CD4-positive, alpha-beta T cell (primary cell): ENCODE measurements at regions of chr7 and their contacts with region 1.

Region 1: DNA sequence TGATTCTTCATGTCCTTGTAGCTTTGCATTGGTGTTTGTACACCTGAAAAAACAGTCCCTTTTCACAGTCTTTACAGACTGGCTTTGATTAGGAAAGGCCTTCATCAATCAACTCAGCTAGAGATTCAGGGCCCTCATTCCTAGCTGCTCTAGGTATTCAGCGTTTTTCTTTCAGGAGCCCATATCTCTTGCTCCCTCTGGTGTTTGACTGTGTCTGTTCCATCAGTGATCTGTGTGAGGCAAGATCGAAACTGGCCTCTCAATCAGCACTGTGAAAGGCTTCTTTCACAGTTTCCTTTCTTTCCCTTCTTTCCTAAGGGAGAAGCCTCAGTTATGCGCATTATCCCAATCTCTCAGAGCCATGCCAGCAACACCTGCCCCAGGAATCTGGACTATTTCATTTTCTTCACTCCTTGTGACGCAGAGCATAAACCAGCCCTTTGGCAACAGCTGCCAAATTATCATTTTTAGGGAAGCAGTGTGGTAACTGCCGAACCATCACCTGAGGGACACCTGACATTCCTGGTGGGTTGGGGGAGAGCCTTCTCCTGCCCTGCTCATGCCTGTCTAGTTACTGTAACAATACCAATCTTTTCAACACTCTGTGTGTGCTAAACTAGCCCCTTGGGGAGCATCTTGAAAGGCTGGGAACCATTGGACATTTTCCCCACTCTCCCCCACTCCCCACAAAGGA is 75.7 kb upstream of the CCDC71L start:
- DNase-seq: peak in 10 of 14 experiments; percentile 7 to 80 (median 38)
- ATAC-seq: peak; percentile 91
- H3K4me3 ChIP-seq: no peak overlapping the region
- H3K4me3 Mint-ChIP-seq: peak overlapping the region; percentile 18
- H3K27ac ChIP-seq: no peak overlapping the region
- H3K27ac Mint-ChIP-seq: no peak overlapping the region
- H3K4me1 ChIP-seq: peaks cover 8% of the 10 kb centered on the region
- H3K4me1 Mint-ChIP-seq: peaks cover 17% of the 10 kb centered on the region
- H3K27me3 ChIP-seq: no peaks in the 10 kb centered on the region
- H3K27me3 Mint-ChIP-seq: no peaks in the 10 kb centered on the region
- CTCF ChIP-seq: peak; percentile 78

Region 2: GRCh38 chr7:106176414-106177299 is 560.0 kb before region 1 on chr7:
- CTCF ChIA-PET with region 1: interaction called, 6 read pairs
- POLR2A ChIA-PET with region 1: no interaction called
- intact Hi-C with region 1: loop called (anchors 1 kb)
- DNase-seq: peak; percentile 37 to 79 (median 61)
- ATAC-seq: peak; percentile 82
- H3K4me3 ChIP-seq: no peak overlapping the region
- H3K4me3 Mint-ChIP-seq: no peak overlapping the region
- H3K27ac ChIP-seq: no peak overlapping the region
- H3K27ac Mint-ChIP-seq: no peak overlapping the region
- H3K4me1 ChIP-seq: peaks cover 6% of the 10 kb centered on the region
- H3K4me1 Mint-ChIP-seq: peaks cover 5% of the 10 kb centered on the region
- H3K27me3 ChIP-seq: peaks cover 0 to 4% of the 10 kb centered on the region in 2 experiments
- H3K27me3 Mint-ChIP-seq: peaks cover 19% of the 10 kb centered on the region
- CTCF ChIP-seq: peak; percentile 95

Region 3: DNA sequence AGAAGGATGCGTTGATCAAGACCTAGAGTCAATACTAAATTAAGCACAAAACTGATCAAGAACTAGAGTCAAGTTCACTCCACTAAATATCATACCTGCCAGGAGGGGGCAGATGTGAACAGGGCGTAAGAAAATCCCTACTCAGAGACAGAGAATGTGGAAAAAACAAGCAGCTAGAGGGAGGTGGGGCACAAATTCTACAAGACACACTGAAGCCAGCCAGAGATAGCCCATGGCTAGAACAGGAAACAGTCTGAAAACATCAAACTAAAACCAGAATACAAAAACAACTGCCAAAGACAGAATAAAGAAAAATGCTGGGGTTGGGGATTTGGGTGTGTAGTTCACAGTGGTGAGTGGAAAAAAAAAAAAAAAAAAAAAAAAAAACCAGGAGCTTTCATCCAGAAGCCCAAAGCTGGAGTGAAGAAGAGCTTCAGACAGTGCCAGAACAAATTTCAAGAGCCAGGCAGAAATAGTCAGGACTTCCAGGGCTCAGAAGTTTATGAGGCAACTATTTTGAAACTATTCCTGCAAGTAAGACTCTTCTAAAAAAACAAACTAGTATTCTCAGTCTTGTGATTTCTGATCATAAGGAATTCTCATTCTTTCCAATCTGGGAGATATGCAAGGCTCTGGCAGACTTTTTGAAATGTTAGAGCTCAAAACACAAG is 194.0 kb before region 1 on chr7:
- CTCF ChIA-PET with region 1: interaction called, 10 read pairs
- POLR2A ChIA-PET with region 1: no interaction called
- intact Hi-C with region 1: loop called (anchors 1 to 2 kb)
- DNase-seq: peak in 9 of 14 experiments; percentile 2 to 64 (median 8)
- ATAC-seq: peak; percentile 60
- H3K4me3 ChIP-seq: no peak overlapping the region
- H3K4me3 Mint-ChIP-seq: no peak overlapping the region
- H3K27ac ChIP-seq: no peak overlapping the region
- H3K27ac Mint-ChIP-seq: no peak overlapping the region
- H3K4me1 ChIP-seq: no peaks in the 10 kb centered on the region
- H3K4me1 Mint-ChIP-seq: peaks cover 6% of the 10 kb centered on the region
- H3K27me3 ChIP-seq: no peaks in the 10 kb centered on the region
- H3K27me3 Mint-ChIP-seq: no peaks in the 10 kb centered on the region
- CTCF ChIP-seq: peak; percentile 47

Region 4: GRCh38 chr7:106717955-106718871 is 18.4 kb before region 1 on chr7:
- CTCF ChIA-PET with region 1: interaction called, 19 read pairs
- POLR2A ChIA-PET with region 1: interaction called, 3 read pairs
- intact Hi-C with region 1: no loop called
- DNase-seq: peak in 10 of 14 experiments; percentile 22 to 81 (median 42)
- ATAC-seq: peak; percentile 97
- H3K4me3 ChIP-seq: no peak overlapping the region
- H3K4me3 Mint-ChIP-seq: no peak overlapping the region
- H3K27ac ChIP-seq: no peak overlapping the region
- H3K27ac Mint-ChIP-seq: no peak overlapping the region
- H3K4me1 ChIP-seq: peaks cover 6% of the 10 kb centered on the region
- H3K4me1 Mint-ChIP-seq: no peaks in the 10 kb centered on the region
- H3K27me3 ChIP-seq: no peaks in the 10 kb centered on the region
- H3K27me3 Mint-ChIP-seq: no peaks in the 10 kb centered on the region
- CTCF ChIP-seq: no peak